B cell (primary cell): ENCODE measurements at regions of chr19 and their contacts with region 1.

Region 1: DNA sequence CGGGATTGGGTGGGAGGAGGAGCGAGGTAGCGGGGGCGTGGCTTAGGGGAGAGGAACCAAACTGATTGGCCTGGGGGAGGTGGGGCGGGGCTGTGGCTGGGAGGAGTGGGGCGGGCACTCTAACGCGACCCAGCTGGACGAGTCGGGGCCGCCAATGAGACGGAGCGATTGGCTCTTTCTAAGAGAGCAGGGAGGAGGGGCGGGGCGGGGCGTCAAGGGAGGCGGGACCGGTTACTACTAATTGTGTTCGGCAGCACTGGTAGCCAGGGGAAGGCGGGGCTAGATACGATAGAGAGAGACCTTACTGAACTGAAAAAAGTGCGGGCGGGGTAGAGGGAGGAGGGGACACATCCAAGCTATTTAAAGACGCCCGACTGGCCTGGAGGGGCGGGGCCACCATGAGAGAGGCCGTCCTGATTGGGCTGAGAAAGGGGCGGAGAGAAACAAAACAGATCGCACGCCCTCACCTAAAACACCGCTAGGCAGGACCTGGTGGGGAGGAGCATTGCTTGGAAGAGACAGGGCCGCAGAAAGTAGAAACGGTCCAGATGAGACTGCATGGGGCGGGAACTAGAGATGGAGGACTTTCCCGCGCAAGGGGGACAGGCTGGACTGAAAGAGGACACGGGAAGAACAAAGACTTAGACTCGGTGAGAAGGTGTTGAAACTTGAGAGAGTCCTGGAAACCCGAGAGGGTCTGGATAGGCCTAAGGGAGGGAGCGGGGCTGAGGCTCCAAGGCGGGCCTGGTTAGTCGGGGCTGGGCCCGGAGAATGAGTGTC is at the start of gene KCNC3:
- DNase-seq: peak; percentile 99
- ATAC-seq: peak; percentile 64
- H3K4me3 ChIP-seq: peak within 1 kb of the TSS in 4 of 5 experiments; percentile 41 to 71 (median 56)
- H3K4me3 Mint-ChIP-seq: peak within 1 kb of the TSS; percentile 91
- H3K27ac ChIP-seq: peak within 1 kb of the TSS; percentile 50 to 77
- H3K27ac Mint-ChIP-seq: peak within 1 kb of the TSS; percentile 94
- H3K4me1 ChIP-seq: peaks cover 62 to 80% of the 10 kb centered on the region in 2 donors
- H3K4me1 Mint-ChIP-seq: peaks cover 79% of the 10 kb centered on the region
- H3K27me3 ChIP-seq: peaks cover 0 to 9% (median 2%) of the 10 kb centered on the region in 4 experiments
- H3K27me3 Mint-ChIP-seq: peaks cover 12% of the 10 kb centered on the region
- CTCF ChIP-seq: no peak
- total RNA-seq, gene KCNC3: 23.0 and 24.4 TPM in 2 replicates

Region 2: GRCh38 chr19:50252111-50252886 is 77.0 kb before region 1 on chr19:
- CTCF ChIA-PET with region 1: interaction called, 10 read pairs
- POLR2A ChIA-PET with region 1: no interaction called
- intact Hi-C with region 1: no loop called
- DNase-seq: peak; percentile 61
- ATAC-seq: peak; percentile 45
- H3K4me3 ChIP-seq: no peak overlapping the region
- H3K4me3 Mint-ChIP-seq: no peak overlapping the region
- H3K27ac ChIP-seq: no peak overlapping the region
- H3K27ac Mint-ChIP-seq: no peak overlapping the region
- H3K4me1 ChIP-seq: no peaks in the 10 kb centered on the region
- H3K4me1 Mint-ChIP-seq: peaks cover 5% of the 10 kb centered on the region
- H3K27me3 ChIP-seq: peaks cover 0 to 9% (median 0%) of the 10 kb centered on the region in 4 experiments
- H3K27me3 Mint-ChIP-seq: peaks cover 18% of the 10 kb centered on the region
- CTCF ChIP-seq: peak; percentile 74

Region 3: DNA sequence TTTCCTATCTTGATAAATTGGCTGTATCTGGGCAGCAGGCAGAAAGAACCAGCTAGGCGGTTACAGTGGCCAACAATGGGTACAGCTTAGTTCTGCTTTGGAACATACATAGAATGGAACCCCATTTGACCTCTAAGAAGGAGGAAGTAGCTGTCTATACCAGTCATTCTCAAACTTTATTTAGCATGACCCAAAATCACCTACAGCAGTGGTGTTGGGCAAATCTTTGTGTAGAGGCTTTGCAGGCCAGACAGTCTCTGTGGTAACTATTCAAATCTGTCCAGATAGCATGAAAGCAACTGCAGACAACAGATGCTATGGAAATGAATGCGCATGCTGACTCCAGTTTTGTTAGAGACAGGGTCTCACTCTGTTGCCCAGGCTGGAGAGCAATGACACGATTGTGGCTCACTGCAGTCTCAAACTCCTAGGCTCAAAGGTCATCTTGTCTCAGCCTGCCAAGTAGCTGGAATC is 11.8 kb after region 1 on chr19:
- CTCF ChIA-PET with region 1: interaction called, 45 read pairs
- POLR2A ChIA-PET with region 1: interaction called, 122 read pairs
- intact Hi-C with region 1: loop called (anchors 1 kb)
- DNase-seq: peak; percentile 81
- ATAC-seq: peak; percentile 56
- H3K4me3 ChIP-seq: peak overlapping the region in 4 of 5 experiments; percentile 61 to 91 (median 76)
- H3K4me3 Mint-ChIP-seq: peak overlapping the region; percentile 86
- H3K27ac ChIP-seq: peak overlapping the region; percentile 37 to 72
- H3K27ac Mint-ChIP-seq: peak overlapping the region; percentile 91
- H3K4me1 ChIP-seq: peaks cover 65 to 84% of the 10 kb centered on the region in 2 donors
- H3K4me1 Mint-ChIP-seq: peaks cover 77% of the 10 kb centered on the region
- H3K27me3 ChIP-seq: no peaks in the 10 kb centered on the region
- H3K27me3 Mint-ChIP-seq: no peaks in the 10 kb centered on the region
- CTCF ChIP-seq: no peak

Region 4: DNA sequence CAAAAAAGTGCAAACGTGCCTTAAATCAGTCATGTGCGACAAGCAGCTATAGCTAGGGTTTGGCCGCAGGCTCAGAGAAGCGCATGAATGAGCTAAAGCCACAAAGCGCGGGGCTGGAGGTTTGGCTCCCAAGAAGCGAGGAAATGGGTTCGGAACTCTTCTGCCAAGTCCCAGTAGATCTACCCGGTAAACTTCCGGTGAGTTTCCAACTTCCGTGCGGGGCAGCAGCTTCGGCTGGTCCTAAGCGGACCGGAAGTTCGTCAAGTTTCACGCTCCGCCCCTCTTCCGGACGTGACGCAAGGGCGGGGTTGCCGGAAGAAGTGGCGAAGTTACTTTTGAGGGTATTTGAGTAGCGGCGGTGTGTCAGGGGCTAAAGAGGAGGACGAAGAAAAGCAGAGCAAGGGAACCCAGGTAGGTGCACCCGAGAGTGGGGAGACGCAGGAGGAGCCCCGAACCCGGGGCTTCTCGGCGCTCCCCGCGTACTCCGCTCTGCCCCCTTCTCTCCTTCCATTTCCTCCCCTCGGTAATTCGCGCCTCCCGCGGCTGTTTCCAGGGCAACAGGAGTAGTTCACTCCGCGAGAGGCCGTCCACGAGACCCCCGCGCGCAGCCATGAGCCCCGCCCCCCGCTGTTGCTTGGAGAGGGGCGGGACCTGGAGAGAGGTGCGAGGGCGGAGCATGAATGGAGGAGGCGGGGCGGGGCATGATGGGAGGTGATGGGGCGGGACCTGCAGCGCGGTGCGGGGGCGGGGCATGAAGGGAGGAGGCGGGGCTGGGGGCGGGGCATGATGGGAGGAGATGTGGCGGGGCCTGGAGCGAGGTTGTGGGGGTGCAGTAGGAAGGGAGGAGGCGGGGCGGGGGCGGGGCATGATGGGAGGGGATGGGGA is 47.1 kb after region 1 on chr19 and contains the start of gene NR1H2:
- CTCF ChIA-PET with region 1: interaction called, 3 read pairs
- POLR2A ChIA-PET with region 1: no interaction called
- intact Hi-C with region 1: loop called (anchors 1 kb)
- DNase-seq: peak; percentile 99
- ATAC-seq: peak; percentile 87
- H3K4me3 ChIP-seq: peak within 1 kb of the TSS; percentile 30 to 98 (median 91)
- H3K4me3 Mint-ChIP-seq: peak within 1 kb of the TSS; percentile 97
- H3K27ac ChIP-seq: peak within 1 kb of the TSS; percentile 99 to 100
- H3K27ac Mint-ChIP-seq: peak within 1 kb of the TSS; percentile 99
- H3K4me1 ChIP-seq: peaks cover 6 to 14% of the 10 kb centered on the region in 2 donors
- H3K4me1 Mint-ChIP-seq: peaks cover 19% of the 10 kb centered on the region
- H3K27me3 ChIP-seq: no peaks in the 10 kb centered on the region
- H3K27me3 Mint-ChIP-seq: no peaks in the 10 kb centered on the region
- CTCF ChIP-seq: no peak
- total RNA-seq, gene NR1H2: 116 and 118 TPM in 2 replicates

Region 5: DNA sequence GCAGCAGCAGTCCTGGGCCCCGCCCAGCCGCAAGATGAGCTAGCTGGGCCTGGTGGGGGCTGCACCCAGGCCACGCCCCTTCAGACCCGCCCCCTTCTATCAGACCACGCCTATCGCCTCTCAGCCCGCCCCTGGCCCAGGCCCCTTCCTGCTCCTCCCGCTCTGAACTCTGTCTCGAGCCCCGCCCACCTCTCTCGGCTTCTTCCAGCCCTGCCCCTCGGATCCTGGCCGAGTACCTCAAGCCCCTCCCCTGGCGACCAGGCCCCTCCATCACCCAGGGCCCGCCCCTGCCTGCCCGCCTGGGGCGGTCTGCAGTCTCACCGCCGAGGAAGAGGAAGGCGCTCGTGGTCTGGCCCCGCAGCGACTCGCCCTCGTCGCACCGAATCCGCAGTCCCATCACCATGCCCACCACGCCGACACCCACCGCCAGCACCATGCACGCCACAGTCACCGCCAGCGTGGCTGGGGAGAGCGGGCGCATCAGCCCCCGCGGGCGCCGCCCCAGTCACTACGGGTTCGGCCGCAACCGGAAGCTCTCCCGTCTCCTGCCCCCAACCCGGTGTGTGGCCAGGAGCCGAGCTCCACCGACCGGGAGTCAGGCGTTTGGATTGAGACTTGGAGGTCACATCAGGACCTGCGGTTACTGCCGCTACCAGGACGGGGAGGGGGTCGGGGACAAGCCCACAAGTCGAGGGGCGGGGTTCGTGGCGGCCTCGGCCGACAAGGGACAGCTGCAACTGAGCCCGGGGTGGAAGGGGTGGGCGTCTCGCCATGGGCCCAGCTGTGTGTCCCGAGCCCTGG is 1038.4 kb after region 1 on chr19:
- CTCF ChIA-PET with region 1: no interaction called
- POLR2A ChIA-PET with region 1: interaction called, 14 read pairs
- intact Hi-C with region 1: no loop called
- DNase-seq: peak; percentile 98
- ATAC-seq: peak; percentile 85
- H3K4me3 ChIP-seq: peak overlapping the region; percentile 73 to 94 (median 78)
- H3K4me3 Mint-ChIP-seq: peak overlapping the region; percentile 97
- H3K27ac ChIP-seq: peak overlapping the region; percentile 80 to 87
- H3K27ac Mint-ChIP-seq: peak overlapping the region; percentile 95
- H3K4me1 ChIP-seq: peaks cover 5 to 36% of the 10 kb centered on the region in 2 donors
- H3K4me1 Mint-ChIP-seq: peaks cover 37% of the 10 kb centered on the region
- H3K27me3 ChIP-seq: no peaks in the 10 kb centered on the region
- H3K27me3 Mint-ChIP-seq: no peaks in the 10 kb centered on the region
- CTCF ChIP-seq: no peak